ENCODE measurements at regions of chr10 and their contacts with region 1.

Region 1: GRCh38 chr10:102432162-102432950 is at the start of gene CUEDC2:
- DNase-seq: peak; percentile 95 to 96
- ATAC-seq: peak; percentile 94 to 97 (median 96)
- H3K4me3 ChIP-seq: peak within 1 kb of the TSS; percentile 99
- H3K4me3 Mint-ChIP-seq: peak within 1 kb of the TSS; percentile 97
- H3K27ac ChIP-seq: peak within 1 kb of the TSS; percentile 63
- H3K27ac Mint-ChIP-seq: peak within 1 kb of the TSS; percentile 86 to 91
- H3K4me1 ChIP-seq: peaks cover 56% of the 10 kb centered on the region
- H3K4me1 Mint-ChIP-seq: peaks cover 56 to 57% of the 10 kb centered on the region in 2 donors
- H3K27me3 ChIP-seq: no peaks in the 10 kb centered on the region
- H3K27me3 Mint-ChIP-seq: no peaks in the 10 kb centered on the region
- CTCF ChIP-seq: no peak
- total RNA-seq, gene CUEDC2: 35.0 to 43.0 (median 37.7) TPM

Region 2: GRCh38 chr10:102132563-102133372 is 299.6 kb before region 1 on chr10 and contains the start of gene PPRC1:
- intact Hi-C with region 1: loop called (anchors 1 kb)
- DNase-seq: peak; percentile 94 to 98
- ATAC-seq: peak; percentile 94 to 99 (median 96)
- H3K4me3 ChIP-seq: peak within 1 kb of the TSS; percentile 96
- H3K4me3 Mint-ChIP-seq: peak within 1 kb of the TSS; percentile 98
- H3K27ac ChIP-seq: peak within 1 kb of the TSS; percentile 86
- H3K27ac Mint-ChIP-seq: peak within 1 kb of the TSS; percentile 93 to 97
- H3K4me1 ChIP-seq: peaks cover 27% of the 10 kb centered on the region
- H3K4me1 Mint-ChIP-seq: peaks cover 33 to 37% of the 10 kb centered on the region in 2 donors
- H3K27me3 ChIP-seq: no peaks in the 10 kb centered on the region
- H3K27me3 Mint-ChIP-seq: no peaks in the 10 kb centered on the region
- CTCF ChIP-seq: peak; percentile 96
- total RNA-seq, gene PPRC1: 29.1 to 48.0 (median 37.7) TPM

Region 3: DNA sequence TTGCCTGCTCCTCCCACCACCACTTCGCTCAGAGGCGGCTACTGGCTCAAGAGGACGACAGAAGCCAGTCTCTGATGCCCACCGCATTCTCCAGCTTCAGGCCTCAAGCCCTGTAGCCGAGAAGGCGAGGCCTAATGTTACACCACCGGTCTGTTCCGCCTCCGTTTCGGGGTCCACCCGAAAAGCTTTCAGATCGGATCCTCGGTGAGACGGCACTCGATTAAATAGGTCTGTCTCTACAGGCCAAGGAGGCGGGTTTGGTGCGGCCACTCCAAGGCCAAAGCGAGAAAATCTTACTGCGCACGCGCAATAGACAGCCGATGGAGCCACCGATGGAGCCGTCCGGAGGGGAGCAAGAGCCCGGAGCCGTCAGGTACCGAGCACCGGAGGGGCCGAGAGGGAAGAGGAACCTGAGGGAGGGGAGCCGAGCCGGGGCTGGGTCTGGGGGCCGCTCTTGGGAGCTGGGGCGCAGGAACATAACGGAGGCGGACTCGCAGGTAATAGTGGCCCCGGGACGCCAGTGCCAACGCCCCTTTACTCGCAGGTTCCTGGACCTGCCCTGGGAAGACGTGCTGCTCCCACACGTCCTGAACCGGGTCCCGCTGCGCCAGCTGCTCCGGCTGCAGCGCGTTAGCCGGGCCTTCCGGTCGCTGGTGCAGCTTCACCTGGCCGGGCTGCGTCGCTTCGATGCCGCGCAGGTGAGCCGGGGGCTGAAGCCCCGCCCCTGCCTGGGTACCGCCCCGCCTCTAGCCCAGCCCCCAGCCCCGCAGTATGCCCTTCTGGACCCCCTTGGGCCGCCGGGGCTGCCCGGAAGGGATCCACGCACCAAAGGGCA is 11.3 kb before region 1 on chr10 and contains the start of gene FBXL15:
- intact Hi-C with region 1: loop called (anchors 1 kb)
- DNase-seq: peak; percentile 93 to 96
- ATAC-seq: peak; percentile 77 to 91 (median 81)
- H3K4me3 ChIP-seq: peak within 1 kb of the TSS; percentile 83
- H3K4me3 Mint-ChIP-seq: peak within 1 kb of the TSS; percentile 98
- H3K27ac ChIP-seq: peak within 1 kb of the TSS; percentile 81
- H3K27ac Mint-ChIP-seq: peak within 1 kb of the TSS; percentile 91 to 97
- H3K4me1 ChIP-seq: peaks cover 39% of the 10 kb centered on the region
- H3K4me1 Mint-ChIP-seq: peaks cover 12 to 41% of the 10 kb centered on the region in 2 donors
- H3K27me3 ChIP-seq: peaks cover 21% of the 10 kb centered on the region
- H3K27me3 Mint-ChIP-seq: peaks cover 5 to 18% of the 10 kb centered on the region in 2 donors
- CTCF ChIP-seq: no peak
- total RNA-seq, gene FBXL15: 15.2 to 17.4 (median 15.5) TPM

Region 4: GRCh38 chr10:102450194-102450938 is 18.0 kb after region 1 on chr10:
- intact Hi-C with region 1: loop called (anchors 1 kb)
- DNase-seq: peak; percentile 86 to 97
- ATAC-seq: peak; percentile 81 to 95 (median 85)
- H3K4me3 ChIP-seq: peak overlapping the region; percentile 95
- H3K4me3 Mint-ChIP-seq: peak overlapping the region; percentile 95
- H3K27ac ChIP-seq: peak overlapping the region; percentile 90
- H3K27ac Mint-ChIP-seq: peak overlapping the region; percentile 88 to 90
- H3K4me1 ChIP-seq: peaks cover 29% of the 10 kb centered on the region
- H3K4me1 Mint-ChIP-seq: peaks cover 20 to 23% of the 10 kb centered on the region in 2 donors
- H3K27me3 ChIP-seq: no peaks in the 10 kb centered on the region
- H3K27me3 Mint-ChIP-seq: no peaks in the 10 kb centered on the region
- CTCF ChIP-seq: no peak

Region 5: DNA sequence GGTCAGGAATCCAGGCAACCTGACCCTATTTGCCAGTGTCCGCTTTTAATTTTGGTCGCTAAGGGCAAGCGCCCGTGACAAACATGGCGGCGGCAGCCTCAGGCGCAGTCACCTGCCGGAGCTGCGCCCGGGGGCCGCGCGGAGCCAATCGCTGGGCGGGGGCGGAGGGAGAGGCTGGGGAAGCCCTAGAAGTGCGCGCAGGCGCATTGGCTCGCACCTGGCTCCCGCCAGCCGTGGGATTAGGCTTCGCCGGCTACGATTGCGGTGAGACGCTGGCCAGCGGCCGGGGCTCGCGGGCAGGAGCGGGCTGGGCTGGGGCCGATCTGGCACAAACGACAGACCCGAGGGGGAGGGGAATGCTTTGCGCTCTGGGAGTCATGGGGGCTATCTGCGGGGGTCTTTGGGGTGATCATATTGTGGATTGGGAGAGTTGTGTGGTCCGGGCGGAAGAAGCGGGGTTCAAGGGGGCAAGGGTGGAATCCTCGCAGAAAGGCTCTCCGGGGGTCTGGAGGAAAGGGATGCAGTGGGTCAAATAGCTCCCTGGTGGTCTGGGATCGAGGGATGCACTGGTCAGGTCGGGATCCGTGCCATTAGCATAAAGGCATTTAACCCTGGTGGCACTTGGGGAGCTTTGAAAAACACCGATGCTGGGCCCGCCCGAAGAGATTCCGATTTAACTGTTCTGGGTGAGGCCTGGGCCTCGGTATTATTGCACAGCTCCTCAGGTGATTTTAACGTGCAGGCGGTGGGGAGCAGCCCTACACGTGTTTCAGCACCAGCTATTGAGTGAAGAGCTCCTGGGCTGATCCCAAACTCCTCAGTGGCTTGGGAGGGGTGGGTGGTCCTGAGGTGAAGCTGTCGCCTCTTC is 29.1 kb after region 1 on chr10:
- intact Hi-C with region 1: loop called (anchors 1 kb)
- DNase-seq: peak; percentile 89 to 97
- ATAC-seq: peak; percentile 99 to 100 (median 100)
- H3K4me3 ChIP-seq: peak overlapping the region; percentile 77
- H3K4me3 Mint-ChIP-seq: peak overlapping the region; percentile 98
- H3K27ac ChIP-seq: peak overlapping the region; percentile 53
- H3K27ac Mint-ChIP-seq: peak overlapping the region; percentile 80 to 96
- H3K4me1 ChIP-seq: peaks cover 15% of the 10 kb centered on the region
- H3K4me1 Mint-ChIP-seq: peaks cover 22 to 26% of the 10 kb centered on the region in 2 donors
- H3K27me3 ChIP-seq: no peaks in the 10 kb centered on the region
- H3K27me3 Mint-ChIP-seq: peaks cover 0 to 2% of the 10 kb centered on the region in 2 donors
- CTCF ChIP-seq: no peak

Measured in natural killer cell (primary cell).